Astrocyte of the cerebellum (primary cell): ENCODE measurements at regions of chr20 and their contacts with region 1.

Region 1: DNA sequence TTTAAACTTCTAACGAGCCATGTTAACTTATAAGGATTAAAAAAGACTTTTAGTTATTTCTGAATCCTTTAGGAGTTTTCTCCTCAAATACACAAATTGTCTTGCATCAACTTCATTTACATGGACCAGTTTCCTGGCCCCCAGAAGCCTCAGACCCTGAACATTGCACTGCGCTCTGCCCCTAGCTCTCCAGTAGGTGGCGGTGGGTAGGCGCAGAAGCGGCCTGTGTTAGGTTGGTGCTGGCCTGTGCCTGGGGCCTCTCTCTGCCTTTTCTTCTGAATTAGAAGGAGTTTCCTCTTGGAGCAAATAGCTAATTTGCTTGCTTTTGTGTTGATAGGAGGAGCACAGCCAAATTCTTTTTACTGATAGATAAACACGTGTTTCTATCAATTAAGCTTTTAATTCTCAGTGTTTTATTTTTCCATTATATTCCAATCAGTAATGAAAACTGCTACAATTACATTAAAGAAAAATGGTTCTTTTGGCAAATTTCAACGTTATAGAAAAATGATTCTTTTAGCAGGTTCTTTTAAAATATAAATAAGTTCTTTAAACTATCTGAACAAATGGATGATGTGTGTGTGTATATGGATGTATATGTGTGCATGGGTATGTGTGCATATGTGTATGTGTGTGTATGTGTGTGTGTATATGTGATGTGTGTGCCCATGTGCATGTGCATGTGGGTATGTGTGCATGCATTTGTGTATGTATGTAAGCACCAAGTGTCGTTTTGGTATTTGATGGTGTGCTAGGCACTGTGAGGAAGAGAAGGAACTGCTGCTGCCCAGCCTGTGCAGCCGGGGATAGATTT is 44.5 kb downstream of the DTD1 start:
- DNase-seq: peak; percentile 24
- H3K4me3 ChIP-seq: no peak overlapping the region
- CTCF ChIP-seq: peak; percentile 99

Region 2: GRCh38 chr20:18566892-18567742 is 65.3 kb before region 1 on chr20 and contains the start of gene SMIM26:
- in situ Hi-C with region 1: no loop called
- DNase-seq: peak; percentile 63
- H3K4me3 ChIP-seq: peak within 1 kb of the TSS; percentile 77
- CTCF ChIP-seq: no peak

Region 3: GRCh38 chr20:19661717-19662636 is 1029.6 kb after region 1 on chr20:
- in situ Hi-C with region 1: loop called (anchors 25 kb)
- DNase-seq: peak; percentile 57
- H3K4me3 ChIP-seq: no peak overlapping the region
- CTCF ChIP-seq: peak; percentile 99